ENCODE measurements at regions of chr7 and their contacts with region 1.

Region 1: GRCh38 chr7:89200758-89201157 is 405.2 kb upstream of the TEX47 start:
- DNase-seq: no peak
- ATAC-seq: no peak
- H3K4me3 ChIP-seq: no peak overlapping the region
- H3K27ac ChIP-seq: no peak overlapping the region
- H3K4me1 ChIP-seq: no peaks in the 10 kb centered on the region
- H3K27me3 ChIP-seq: no peaks in the 10 kb centered on the region
- CTCF ChIP-seq: no peak
- EP300 ChIP-seq: no peak
- POLR2A ChIP-seq: no peak
- RAD21 ChIP-seq: no peak

Region 2: DNA sequence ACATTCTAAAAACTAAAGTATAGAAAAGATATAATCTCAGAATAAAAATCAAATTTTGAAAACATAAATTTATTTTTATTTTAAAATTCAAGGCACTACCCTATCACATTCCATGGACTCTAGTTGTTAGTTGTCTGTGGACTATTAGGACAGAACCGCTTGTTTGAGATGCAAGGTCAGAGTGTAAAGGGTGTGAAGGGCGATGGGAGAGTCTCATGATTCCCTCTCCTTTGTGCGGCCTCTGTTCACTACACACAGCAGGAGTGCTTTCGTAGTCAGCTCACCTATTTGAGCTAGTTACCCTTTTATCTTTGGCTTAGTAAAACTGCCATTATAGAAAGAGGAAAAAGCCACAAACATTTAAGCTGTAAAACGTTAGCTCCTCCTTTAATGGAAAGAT is 215.5 kb before region 1 on chr7:
- CTCF ChIA-PET with region 1: no interaction called
- POLR2A ChIA-PET with region 1: no interaction called
- in situ Hi-C with region 1: no loop called
- intact Hi-C with region 1: no loop called
- DNase-seq: no peak
- ATAC-seq: no peak
- H3K4me3 ChIP-seq: no peak overlapping the region
- H3K27ac ChIP-seq: no peak overlapping the region
- H3K4me1 ChIP-seq: no peaks in the 10 kb centered on the region
- H3K27me3 ChIP-seq: no peaks in the 10 kb centered on the region
- CTCF ChIP-seq: no peak
- EP300 ChIP-seq: no peak
- POLR2A ChIP-seq: no peak
- RAD21 ChIP-seq: no peak

Region 3: GRCh38 chr7:89966067-89966665 is 765.4 kb after region 1 on chr7:
- CTCF ChIA-PET with region 1: no interaction called
- POLR2A ChIA-PET with region 1: no interaction called
- in situ Hi-C with region 1: no loop called
- intact Hi-C with region 1: loop called (anchors 5 kb)
- DNase-seq: no peak
- ATAC-seq: no peak
- H3K4me3 ChIP-seq: no peak overlapping the region
- H3K27ac ChIP-seq: no peak overlapping the region
- H3K4me1 ChIP-seq: no peaks in the 10 kb centered on the region
- H3K27me3 ChIP-seq: no peaks in the 10 kb centered on the region
- CTCF ChIP-seq: no peak
- EP300 ChIP-seq: no peak
- POLR2A ChIP-seq: no peak
- RAD21 ChIP-seq: no peak

Measured in K562 (cell line).